Activated CD8-positive, alpha-beta T cell treated with anti-CD3 and anti-CD28 coated beads, Interleukin-2, amount 10 ng/mL, durations not matched to agents 7 days and 5 days (primary cell): ENCODE measurements at regions of chr17 and their contacts with region 1.

Region 1: GRCh38 chr17:45247429-45248131 is 14.3 kb downstream of the SPATA32 start:
- DNase-seq: peak; percentile 99
- ATAC-seq: peak; percentile 92
- H3K4me3 Mint-ChIP-seq: peak overlapping the region; percentile 91
- H3K27ac Mint-ChIP-seq: peak overlapping the region; percentile 97
- H3K4me1 Mint-ChIP-seq: peaks cover 75% of the 10 kb centered on the region
- H3K27me3 Mint-ChIP-seq: no peaks in the 10 kb centered on the region

Region 2: DNA sequence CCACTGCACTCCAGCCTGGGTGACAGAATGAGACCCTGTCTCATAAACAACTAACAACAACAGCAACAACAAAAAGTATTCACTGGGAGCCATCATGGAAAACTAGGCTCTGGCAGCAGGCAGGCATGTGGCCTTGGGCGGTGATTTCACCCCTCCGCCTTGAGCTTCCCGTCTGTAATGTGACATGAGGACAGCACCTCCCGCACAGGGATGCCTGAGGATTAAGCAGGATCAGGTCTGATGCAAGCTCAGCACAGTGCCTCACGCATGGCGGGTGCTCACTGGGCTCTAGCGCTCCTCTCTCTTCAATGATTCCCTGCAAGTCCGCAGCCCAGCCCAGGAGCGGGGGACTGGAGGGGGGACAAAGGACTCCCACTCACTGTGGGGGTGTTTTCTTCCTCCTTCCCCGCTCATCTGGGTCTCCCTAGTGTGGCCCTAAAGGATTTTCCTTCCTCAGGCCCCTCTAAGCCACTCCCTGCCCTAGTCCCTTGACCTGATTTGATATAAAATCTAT is 118.1 kb before region 1 on chr17:
- CTCF ChIA-PET with region 1: no interaction called
- POLR2A ChIA-PET with region 1: no interaction called
- DNase-seq: no peak
- ATAC-seq: no peak
- H3K4me3 Mint-ChIP-seq: no peak overlapping the region
- H3K27ac Mint-ChIP-seq: no peak overlapping the region
- H3K4me1 Mint-ChIP-seq: peaks cover 8% of the 10 kb centered on the region
- H3K27me3 Mint-ChIP-seq: peaks cover 10% of the 10 kb centered on the region

Region 3: DNA sequence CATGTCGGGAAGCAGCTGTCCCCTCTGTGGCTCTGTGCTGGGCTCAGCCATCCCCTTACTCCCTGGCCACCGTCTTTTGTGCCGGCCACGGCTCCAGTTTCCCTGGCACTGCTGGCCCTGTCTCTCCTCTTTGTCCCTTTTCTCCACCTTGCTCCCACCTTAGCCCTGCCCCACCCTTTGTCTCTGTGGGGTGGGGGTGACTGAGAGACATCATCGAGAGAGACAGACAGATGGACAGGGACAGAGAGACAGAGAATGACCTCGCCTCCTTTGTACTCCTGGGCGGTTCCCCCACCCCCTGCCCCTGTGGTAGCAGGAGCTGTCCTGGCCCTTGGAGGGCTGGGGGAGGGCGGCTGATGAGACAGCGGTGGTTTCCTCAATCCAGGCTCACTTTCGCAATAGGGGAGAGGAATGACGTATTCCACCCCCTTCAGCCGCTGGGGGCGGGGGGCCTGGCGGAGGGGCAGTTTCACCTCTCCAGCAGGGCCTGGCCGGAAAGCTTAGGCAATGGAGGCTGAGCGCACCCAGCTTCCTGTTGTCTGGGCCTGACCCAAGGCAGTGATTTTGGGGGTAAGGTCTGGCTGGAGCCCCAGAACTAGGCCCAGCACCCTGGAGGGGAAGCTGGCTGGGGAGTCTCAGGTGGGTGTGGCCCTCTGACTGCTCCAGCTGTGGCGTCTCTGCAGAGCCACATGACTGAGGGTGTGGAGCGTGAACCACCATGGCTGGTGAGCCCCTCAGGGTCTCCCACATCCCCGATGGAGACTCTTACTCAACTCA is 18.6 kb before region 1 on chr17:
- CTCF ChIA-PET with region 1: interaction called, 37 read pairs
- POLR2A ChIA-PET with region 1: interaction called, 132 read pairs
- DNase-seq: peak; percentile 83
- ATAC-seq: peak; percentile 41
- H3K4me3 Mint-ChIP-seq: peak overlapping the region; percentile 100
- H3K27ac Mint-ChIP-seq: peak overlapping the region; percentile 94
- H3K4me1 Mint-ChIP-seq: peaks cover 93% of the 10 kb centered on the region
- H3K27me3 Mint-ChIP-seq: no peaks in the 10 kb centered on the region

Region 4: GRCh38 chr17:45235416-45236281 is 11.9 kb before region 1 on chr17:
- CTCF ChIA-PET with region 1: interaction called, 44 read pairs
- POLR2A ChIA-PET with region 1: interaction called, 14 read pairs
- DNase-seq: peak; percentile 86
- ATAC-seq: peak; percentile 68
- H3K4me3 Mint-ChIP-seq: no peak overlapping the region
- H3K27ac Mint-ChIP-seq: peak overlapping the region; percentile 60
- H3K4me1 Mint-ChIP-seq: peaks cover 62% of the 10 kb centered on the region
- H3K27me3 Mint-ChIP-seq: no peaks in the 10 kb centered on the region

Region 5: GRCh38 chr17:45261577-45262515 is 14.3 kb after region 1 on chr17 and contains the start of gene SPATA32:
- CTCF ChIA-PET with region 1: interaction called, 11 read pairs
- POLR2A ChIA-PET with region 1: interaction called, 21 read pairs
- DNase-seq: peak; percentile 85
- ATAC-seq: peak; percentile 88
- H3K4me3 Mint-ChIP-seq: peak within 1 kb of the TSS; percentile 80
- H3K27ac Mint-ChIP-seq: peak within 1 kb of the TSS; percentile 91
- H3K4me1 Mint-ChIP-seq: peaks cover 37% of the 10 kb centered on the region
- H3K27me3 Mint-ChIP-seq: no peaks in the 10 kb centered on the region
- total RNA-seq, gene SPATA32: 0.52 to 0.55 TPM

Region 6: GRCh38 chr17:45270828-45271418 is 23.3 kb after region 1 on chr17:
- CTCF ChIA-PET with region 1: interaction called, 11 read pairs
- POLR2A ChIA-PET with region 1: interaction called, 21 read pairs
- DNase-seq: peak; percentile 67
- ATAC-seq: peak; percentile 64
- H3K4me3 Mint-ChIP-seq: no peak overlapping the region
- H3K27ac Mint-ChIP-seq: no peak overlapping the region
- H3K4me1 Mint-ChIP-seq: peaks cover 2% of the 10 kb centered on the region
- H3K27me3 Mint-ChIP-seq: no peaks in the 10 kb centered on the region

Region 7: DNA sequence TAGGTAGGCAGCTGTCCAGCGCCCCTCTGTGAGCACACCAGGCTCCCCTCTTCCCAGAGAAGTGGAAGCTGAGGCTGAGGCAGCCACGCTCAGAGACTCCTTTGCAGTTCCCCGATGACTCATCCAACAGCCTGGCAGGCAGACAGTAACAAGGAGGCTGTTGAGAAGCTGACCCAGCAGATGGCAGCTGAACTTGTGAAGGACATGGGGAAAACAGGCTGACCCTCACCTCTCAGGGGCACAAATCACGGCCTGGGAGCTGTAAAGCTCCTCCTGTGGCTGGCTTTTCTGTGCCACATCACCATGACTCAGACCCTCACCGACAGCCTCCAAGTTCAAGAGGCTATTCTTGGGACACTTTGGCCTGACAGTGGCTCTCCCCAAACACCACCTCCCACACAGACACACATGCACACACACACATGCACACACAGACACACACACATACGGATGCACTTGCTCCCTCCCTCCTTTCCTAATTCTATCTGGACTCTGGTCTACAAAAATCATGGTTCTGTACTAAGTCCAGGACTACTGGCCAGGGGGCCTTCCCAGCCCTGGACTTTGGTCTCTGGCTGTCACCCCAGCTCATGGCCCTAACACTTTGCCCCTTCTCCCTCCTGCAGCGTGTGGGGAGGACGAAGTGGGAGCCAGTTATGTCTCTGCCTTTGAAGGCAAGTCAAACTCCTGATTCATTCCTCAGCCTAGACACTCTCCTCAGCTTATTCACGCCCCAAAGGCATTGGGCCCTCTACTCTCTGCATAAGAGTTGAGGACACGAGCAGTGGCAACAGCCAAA is 46.0 kb after region 1 on chr17:
- CTCF ChIA-PET with region 1: no interaction called
- POLR2A ChIA-PET with region 1: no interaction called
- DNase-seq: no peak
- ATAC-seq: no peak
- H3K4me3 Mint-ChIP-seq: no peak overlapping the region
- H3K27ac Mint-ChIP-seq: peak overlapping the region; percentile 67
- H3K4me1 Mint-ChIP-seq: peaks cover 88% of the 10 kb centered on the region
- H3K27me3 Mint-ChIP-seq: no peaks in the 10 kb centered on the region